Activated CD4-positive, alpha-beta memory T cell treated with anti-CD3 and anti-CD28 coated beads for 36 hours (primary cell): ENCODE measurements at regions of chr9 and their contacts with region 1.

Region 1: DNA sequence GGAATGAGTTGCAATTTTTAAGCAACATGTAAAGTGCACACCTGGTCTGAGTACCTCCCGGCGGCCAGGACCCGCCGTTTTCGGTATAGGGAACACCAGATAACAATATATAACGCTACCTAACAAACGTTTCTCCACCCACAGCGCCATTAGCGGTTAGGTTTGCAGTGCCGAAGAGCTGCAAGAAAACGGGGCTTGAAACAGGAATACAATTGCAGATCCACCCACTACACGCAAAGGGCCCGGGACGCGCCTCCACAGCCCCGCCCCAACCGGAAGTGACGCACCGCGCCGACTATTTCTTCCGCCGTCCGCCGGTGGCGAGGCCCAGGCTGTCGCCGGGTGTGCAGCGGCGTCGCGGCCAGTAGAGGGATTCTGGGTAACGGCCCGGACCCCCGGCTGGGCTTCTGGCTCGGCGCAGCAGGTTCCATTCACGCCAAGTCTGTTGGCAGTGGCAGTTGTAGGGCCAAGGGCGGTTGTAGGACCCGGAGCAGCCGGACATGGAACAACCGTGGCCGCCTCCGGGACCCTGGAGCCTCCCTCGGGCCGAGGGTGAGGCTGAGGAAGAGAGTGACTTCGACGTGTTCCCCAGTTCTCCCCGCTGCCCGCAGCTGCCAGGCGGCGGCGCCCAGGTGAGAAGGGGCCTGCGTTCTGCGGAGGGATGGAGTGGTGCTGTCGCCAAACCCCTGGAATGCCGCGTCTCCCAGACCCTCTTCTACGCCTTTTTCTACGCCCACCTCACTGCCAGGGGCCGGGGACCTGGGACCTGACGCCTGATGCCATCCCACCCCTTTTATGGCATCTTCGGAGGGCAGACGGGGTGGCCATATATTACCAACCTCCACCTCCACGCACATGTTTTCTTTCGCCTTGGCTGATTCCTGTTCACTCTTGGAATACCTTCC is at the start of gene CDC37L1:
- DNase-seq: peak; percentile 99
- H3K4me3 Mint-ChIP-seq: no peak within 1 kb of the TSS
- H3K27ac Mint-ChIP-seq: no peak within 1 kb of the TSS
- H3K4me1 Mint-ChIP-seq: peaks cover 10% of the 10 kb centered on the region
- H3K27me3 Mint-ChIP-seq: no peaks in the 10 kb centered on the region
- total RNA-seq, gene CDC37L1: 9.7 to 11.0 TPM

Region 2: GRCh38 chr9:4596165-4596922 is 83.2 kb before region 1 on chr9:
- CTCF ChIA-PET with region 1: no interaction called
- POLR2A ChIA-PET with region 1: no interaction called
- intact Hi-C with region 1: loop called (anchors 5 kb)
- DNase-seq: peak; percentile 67
- H3K4me3 Mint-ChIP-seq: no peak overlapping the region
- H3K27ac Mint-ChIP-seq: peak overlapping the region; percentile 72
- H3K4me1 Mint-ChIP-seq: peaks cover 36% of the 10 kb centered on the region
- H3K27me3 Mint-ChIP-seq: no peaks in the 10 kb centered on the region

Region 3: DNA sequence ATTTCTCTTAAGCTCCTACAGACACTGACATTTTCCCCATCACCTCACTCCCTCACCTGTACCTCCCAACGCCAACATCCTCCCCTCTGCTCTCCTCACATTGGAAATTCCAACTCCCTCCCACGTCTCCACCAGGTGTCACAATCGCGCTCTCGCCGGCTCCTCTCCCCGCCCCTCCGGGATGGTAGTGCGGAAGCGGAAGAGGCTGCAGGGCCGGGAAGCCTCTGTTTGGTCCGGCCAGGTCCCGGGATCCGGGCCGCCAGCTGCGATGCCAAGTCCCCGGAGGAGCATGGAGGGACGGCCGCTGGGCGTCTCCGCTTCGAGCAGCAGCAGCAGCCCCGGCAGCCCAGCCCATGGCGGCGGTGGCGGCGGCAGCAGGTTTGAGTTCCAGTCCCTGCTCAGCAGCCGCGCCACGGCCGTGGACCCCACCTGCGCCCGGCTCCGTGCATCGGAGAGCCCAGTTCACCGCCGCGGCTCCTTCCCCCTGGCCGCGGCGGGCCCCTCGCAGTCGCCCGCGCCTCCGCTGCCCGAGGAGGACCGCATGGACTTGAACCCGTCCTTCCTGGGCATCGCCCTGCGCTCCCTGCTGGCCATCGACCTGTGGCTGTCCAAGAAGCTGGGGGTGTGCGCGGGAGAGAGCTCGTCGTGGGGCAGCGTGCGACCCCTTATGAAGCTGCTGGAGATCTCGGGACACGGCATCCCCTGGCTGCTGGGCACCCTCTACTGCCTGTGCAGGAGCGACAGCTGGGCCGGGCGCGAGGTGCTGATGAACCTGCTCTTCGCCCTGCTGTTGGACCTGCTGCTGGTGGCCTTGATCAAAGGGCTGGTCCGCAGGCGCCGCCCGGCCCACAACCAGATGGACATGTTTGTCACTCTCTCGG is 17.2 kb before region 1 on chr9 and contains the start of gene PLPP6:
- CTCF ChIA-PET with region 1: interaction called, 7 read pairs
- POLR2A ChIA-PET with region 1: interaction called, 4 read pairs
- intact Hi-C with region 1: loop called (anchors 1 kb)
- DNase-seq: peak; percentile 88
- H3K4me3 Mint-ChIP-seq: peak within 1 kb of the TSS; percentile 91
- H3K27ac Mint-ChIP-seq: peak within 1 kb of the TSS; percentile 80
- H3K4me1 Mint-ChIP-seq: peaks cover 55% of the 10 kb centered on the region
- H3K27me3 Mint-ChIP-seq: no peaks in the 10 kb centered on the region
- total RNA-seq, gene PLPP6: 4.4 to 4.6 TPM

Region 4: DNA sequence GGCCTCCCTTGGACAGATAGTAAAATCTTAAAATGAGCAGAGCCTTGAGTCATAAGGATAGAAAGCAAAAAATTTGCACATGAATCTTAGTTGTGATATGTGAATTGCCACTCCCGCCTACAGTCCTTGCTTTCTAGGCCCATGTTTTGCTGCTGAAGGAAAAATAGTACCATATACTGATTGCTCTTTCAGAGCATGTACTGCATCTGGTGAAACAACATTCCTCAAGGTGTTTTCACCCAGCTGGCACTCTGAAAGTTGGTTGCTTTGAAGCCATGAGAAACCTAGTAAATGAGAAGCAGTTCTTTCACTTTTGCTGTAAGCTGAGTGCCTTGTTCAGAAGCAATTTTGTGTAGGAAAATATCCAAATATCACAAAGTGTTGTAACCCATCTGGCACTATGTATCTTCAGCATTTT is 10.2 kb after region 1 on chr9:
- CTCF ChIA-PET with region 1: interaction called, 3 read pairs
- POLR2A ChIA-PET with region 1: no interaction called
- intact Hi-C with region 1: loop called (anchors 1 kb)
- DNase-seq: peak; percentile 43
- H3K4me3 Mint-ChIP-seq: no peak overlapping the region
- H3K27ac Mint-ChIP-seq: peak overlapping the region; percentile 2
- H3K4me1 Mint-ChIP-seq: peaks cover 49% of the 10 kb centered on the region
- H3K27me3 Mint-ChIP-seq: no peaks in the 10 kb centered on the region

Region 5: DNA sequence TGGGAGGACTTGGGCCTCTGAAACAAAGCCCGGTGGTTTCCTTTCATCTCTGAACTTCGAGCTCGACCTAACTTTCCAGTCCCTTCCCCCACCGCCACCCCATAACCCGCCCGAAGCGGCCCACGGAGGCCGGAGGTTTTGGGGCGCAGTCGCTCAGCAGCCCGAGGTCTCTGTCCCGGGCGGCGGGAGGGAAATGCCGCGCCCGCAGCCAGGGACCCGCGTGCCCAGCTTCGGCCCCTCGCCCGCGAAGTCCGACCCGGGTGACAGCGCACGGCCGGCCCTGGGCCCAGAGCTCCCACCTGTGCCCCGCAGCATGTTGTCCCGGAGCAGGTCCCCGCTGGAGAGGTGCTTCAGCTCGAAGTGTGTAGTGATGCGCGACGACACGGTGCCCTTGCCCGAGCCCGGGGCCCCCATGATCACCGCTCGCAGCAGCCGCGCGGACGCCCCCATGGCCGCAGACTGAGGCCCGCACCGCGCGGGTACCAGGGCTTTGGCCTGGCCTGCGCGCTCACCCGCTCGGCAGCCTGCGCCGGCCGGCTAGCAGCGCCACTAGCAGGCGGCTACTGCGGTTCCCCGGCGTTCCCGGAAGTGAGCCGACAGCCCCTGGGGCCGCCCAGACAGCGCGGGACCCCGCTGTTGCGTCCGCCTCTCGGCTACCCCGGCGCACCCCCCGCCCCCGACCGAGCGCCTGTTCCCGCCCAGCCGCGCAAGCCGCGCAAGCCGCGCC is 61.3 kb after region 1 on chr9 and contains the start of gene AK3:
- CTCF ChIA-PET with region 1: interaction called, 4 read pairs
- POLR2A ChIA-PET with region 1: interaction called, 6 read pairs
- intact Hi-C with region 1: loop called (anchors 1 kb)
- DNase-seq: peak; percentile 90
- H3K4me3 Mint-ChIP-seq: peak within 1 kb of the TSS; percentile 83
- H3K27ac Mint-ChIP-seq: peak within 1 kb of the TSS; percentile 78
- H3K4me1 Mint-ChIP-seq: peaks cover 34% of the 10 kb centered on the region
- H3K27me3 Mint-ChIP-seq: no peaks in the 10 kb centered on the region
- total RNA-seq, gene AK3: 33.8 to 34.5 TPM

Region 6: GRCh38 chr9:4792572-4793458 is 113.3 kb after region 1 on chr9 and contains the start of gene RCL1:
- CTCF ChIA-PET with region 1: no interaction called
- POLR2A ChIA-PET with region 1: no interaction called
- intact Hi-C with region 1: loop called (anchors 1 kb)
- DNase-seq: peak; percentile 98
- H3K4me3 Mint-ChIP-seq: peak within 1 kb of the TSS; percentile 93
- H3K27ac Mint-ChIP-seq: peak within 1 kb of the TSS; percentile 86
- H3K4me1 Mint-ChIP-seq: peaks cover 49% of the 10 kb centered on the region
- H3K27me3 Mint-ChIP-seq: no peaks in the 10 kb centered on the region
- total RNA-seq, gene RCL1: 26.0 to 28.2 TPM